AG04449 (cell line): ENCODE measurements at regions of chr1 and their contacts with region 1.

Region 1: DNA sequence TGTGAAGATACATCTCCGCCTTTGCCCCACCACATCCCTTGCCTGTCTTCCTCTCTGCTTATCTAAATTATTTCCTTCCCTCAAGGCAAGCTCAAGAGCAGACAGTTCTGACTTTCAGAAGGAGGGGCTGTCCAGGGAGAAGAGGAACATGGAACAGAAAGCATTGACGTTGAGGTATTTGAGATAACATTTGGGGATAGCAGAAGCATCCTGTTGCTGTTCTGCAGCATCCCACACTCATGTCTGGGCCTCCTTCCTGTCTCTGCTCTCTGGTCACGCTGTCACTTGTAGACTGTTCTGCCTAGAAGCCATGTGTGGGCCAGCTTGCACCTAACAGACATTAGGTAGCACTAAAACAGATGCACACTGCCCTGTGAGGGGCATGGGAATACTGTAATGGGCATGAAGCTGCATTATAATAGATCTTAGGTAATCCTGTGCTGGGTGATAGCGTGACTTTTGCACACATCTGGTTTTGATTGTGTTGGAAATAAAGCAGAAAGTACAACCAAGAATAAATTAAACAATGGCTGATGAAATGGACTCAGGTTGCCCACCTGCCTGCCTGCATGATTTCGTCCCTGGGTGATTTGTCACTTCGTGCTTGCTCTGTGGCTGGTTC is 660 bp upstream of the RD3 start:
- DNase-seq: no peak
- H3K4me3 ChIP-seq: no peak overlapping the region
- CTCF ChIP-seq: no peak

Region 2: GRCh38 chr1:211476200-211476849 is 16.3 kb before region 1 on chr1:
- CTCF ChIA-PET with region 1: interaction called, 11 read pairs
- POLR2A ChIA-PET with region 1: no interaction called
- DNase-seq: peak; percentile 17
- H3K4me3 ChIP-seq: no peak overlapping the region
- CTCF ChIP-seq: peak; percentile 82